Breast epithelium (tissue), 4 donors: ENCODE measurements at regions of chr3 and their contacts with region 1.

Region 1: GRCh38 chr3:108234387-108234957 is 12.2 kb upstream of the IFT57 start:
- DNase-seq: no peak
- H3K4me3 ChIP-seq: no peak overlapping the region
- H3K27ac ChIP-seq: no peak overlapping the region
- H3K4me1 ChIP-seq: no peaks in the 10 kb centered on the region
- H3K27me3 ChIP-seq: no peaks in the 10 kb centered on the region
- CTCF ChIP-seq: no peak
- POLR2A ChIP-seq: no peak

Region 2: DNA sequence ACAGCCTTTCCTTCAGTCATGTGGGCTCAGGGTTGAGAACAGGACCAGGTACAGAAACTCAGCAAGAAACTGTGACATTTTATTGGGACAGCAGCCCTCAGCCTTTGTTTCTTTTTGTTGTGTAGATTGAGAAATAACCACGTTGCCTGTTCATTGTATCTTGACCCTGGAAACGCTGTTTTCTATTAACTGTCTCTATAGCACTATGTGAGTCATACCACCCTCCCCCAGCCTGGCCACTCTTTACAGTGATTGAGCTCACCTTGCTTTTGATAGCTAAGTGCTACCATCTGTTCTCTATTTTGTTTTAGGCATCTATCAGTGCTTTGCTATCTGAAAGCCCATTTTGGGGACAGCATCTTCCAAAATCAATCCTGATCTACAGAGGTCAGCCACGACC is 271.5 kb before region 1 on chr3:
- intact Hi-C with region 1: loop called (anchors 5 kb)
- DNase-seq: no peak
- H3K4me3 ChIP-seq: no peak overlapping the region
- H3K27ac ChIP-seq: no peak overlapping the region
- H3K4me1 ChIP-seq: peaks cover 0 to 4% of the 10 kb centered on the region in 2 donors
- H3K27me3 ChIP-seq: no peaks in the 10 kb centered on the region
- CTCF ChIP-seq: no peak
- POLR2A ChIP-seq: no peak